H1 (cell line): ENCODE measurements at regions of chr4 and their contacts with region 1.

Region 1: DNA sequence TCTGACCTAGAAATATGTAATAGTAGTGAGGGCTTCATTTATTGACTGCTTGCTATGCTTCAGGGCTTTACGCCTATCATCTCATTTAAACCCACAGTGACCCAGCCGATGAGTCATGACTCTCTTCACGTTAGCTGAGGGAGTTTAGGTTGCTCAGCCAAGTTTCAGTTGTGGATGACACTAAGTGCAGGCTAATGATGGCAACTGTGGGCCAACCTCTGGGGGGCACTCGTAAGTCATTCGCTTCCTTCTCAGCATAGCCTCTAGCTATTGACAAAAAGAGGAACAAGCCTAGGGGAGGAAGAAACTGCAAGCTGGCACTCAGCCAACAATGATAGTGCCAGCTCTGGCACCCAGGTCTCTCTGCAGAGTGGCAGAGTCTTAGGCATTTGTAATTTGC is 325.0 kb downstream of the ARHGAP10 start:
- DNase-seq: peak in 1 of 2 experiments; percentile 25
- H3K4me3 ChIP-seq: no peak overlapping the region
- H3K27ac ChIP-seq: no peak overlapping the region
- H3K4me1 ChIP-seq: peaks cover 0 to 7% (median 3%) of the 10 kb centered on the region in 4 experiments; a peak in 3 of 7 replicates
- H3K27me3 ChIP-seq: no peaks in the 10 kb centered on the region
- CTCF ChIP-seq: peak; percentile 40 to 54 (median 43)
- EP300 ChIP-seq: no peak
- POLR2A ChIP-seq: no peak
- RAD21 ChIP-seq: peak; percentile 62 to 75

Region 2: DNA sequence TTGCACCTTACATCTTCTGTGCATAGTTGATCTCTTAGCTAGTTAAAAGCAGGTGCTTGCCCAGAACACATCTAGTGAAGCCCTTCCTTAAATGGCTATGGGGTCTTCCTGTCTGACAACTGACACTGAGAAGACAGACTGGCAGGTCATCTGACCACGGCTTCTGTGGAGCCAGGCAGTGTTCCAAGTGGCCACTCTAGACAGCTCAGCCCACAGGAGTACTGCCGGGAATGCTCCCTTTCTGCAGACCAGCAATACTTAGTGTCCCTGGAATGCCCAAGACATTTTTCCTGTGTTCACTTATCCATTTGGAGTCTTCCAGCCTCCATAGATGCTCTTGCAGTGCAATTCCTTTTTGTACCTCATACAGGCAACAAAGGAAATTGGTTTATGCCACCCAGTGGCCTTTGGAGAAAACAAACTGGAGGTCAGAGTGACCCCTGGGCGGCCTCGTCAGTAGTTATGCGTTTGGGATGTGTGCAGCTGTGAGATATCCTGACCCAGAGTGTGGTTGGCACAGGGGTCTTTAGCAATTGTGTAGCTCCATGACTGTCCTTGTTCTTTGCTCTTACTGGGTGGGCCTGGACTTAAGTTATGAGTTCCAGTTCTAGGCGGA is 10.5 kb after region 1 on chr4:
- CTCF ChIA-PET with region 1: interaction called, 11 read pairs
- POLR2A ChIA-PET with region 1: interaction called, 3 read pairs
- DNase-seq: peak in 1 of 2 experiments; percentile 38
- H3K4me3 ChIP-seq: no peak overlapping the region
- H3K27ac ChIP-seq: no peak overlapping the region; the same call in 1 of the 2 replicates
- H3K4me1 ChIP-seq: peaks cover 0 to 3% (median 0%) of the 10 kb centered on the region in 4 experiments; a peak in 3 of 7 replicates
- H3K27me3 ChIP-seq: no peaks in the 10 kb centered on the region
- CTCF ChIP-seq: 0 out of 4 replicates have a peak, but pooled peaks of 1 of the 3 experiments have one; percentile 9
- EP300 ChIP-seq: no peak
- POLR2A ChIP-seq: no peak
- RAD21 ChIP-seq: no peak